Mammary epithelial cell (primary cell): ENCODE measurements at regions of chr12 and their contacts with region 1.

Region 1: GRCh38 chr12:100234598-100235304 is 32.1 kb downstream of the DEPDC4 start:
- DNase-seq: no peak
- H3K4me3 ChIP-seq: no peak overlapping the region
- H3K27ac ChIP-seq: no peak overlapping the region
- H3K4me1 ChIP-seq: peaks cover 5% of the 10 kb centered on the region
- H3K27me3 ChIP-seq: no peaks in the 10 kb centered on the region
- CTCF ChIP-seq: peak; percentile 73 to 77

Region 2: DNA sequence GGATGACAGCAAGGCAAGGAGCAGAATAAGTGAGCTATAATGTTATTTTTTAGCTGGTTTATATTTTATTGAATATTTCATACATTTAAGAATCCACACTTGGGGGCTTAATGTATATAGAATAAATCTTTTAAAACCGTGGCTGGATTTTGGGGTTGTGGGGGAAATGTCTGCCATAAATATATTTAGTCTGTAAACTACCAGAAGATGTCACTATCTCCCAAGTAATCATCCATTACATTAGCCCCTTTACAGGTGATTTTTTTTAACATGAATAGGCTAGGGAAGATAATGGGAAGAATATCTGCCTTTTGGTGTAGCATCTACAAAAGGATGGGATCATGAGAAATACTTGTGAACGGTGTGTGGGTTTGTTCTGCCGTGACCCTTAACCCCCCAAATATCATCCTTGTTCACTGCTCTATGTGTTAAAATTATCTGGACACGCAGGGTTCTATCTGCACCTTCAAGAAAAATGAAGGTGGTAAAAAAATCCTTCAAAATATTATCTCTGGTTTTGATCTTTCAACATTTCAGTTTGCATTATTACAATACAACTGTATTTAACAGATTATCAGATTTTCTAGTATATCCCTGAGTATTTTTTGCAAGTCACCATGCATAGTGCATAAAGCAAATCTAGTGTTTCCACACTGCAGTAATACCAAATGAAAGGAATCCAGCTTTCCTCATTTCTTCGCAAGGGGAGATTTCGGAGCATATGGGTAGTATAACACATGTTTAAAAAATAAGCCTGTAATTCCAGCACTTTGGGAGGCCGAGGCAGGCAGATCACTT is 114.1 kb after region 1 on chr12:
- CTCF ChIA-PET with region 1: no interaction called
- dilution Hi-C with region 1: no loop called
- in situ Hi-C with region 1: no loop called
- intact Hi-C with region 1: loop called (anchors 1 kb)
- DNase-seq: peak; percentile 10
- H3K4me3 ChIP-seq: no peak overlapping the region
- H3K27ac ChIP-seq: no peak overlapping the region
- H3K4me1 ChIP-seq: no peaks in the 10 kb centered on the region
- H3K27me3 ChIP-seq: no peaks in the 10 kb centered on the region
- CTCF ChIP-seq: peak; percentile 38 to 48

Region 3: GRCh38 chr12:100554608-100555077 is 319.9 kb after region 1 on chr12:
- CTCF ChIA-PET with region 1: no interaction called
- dilution Hi-C with region 1: no loop called
- in situ Hi-C with region 1: loop called (anchors 10 to 25 kb)
- intact Hi-C with region 1: loop called (anchors 1 kb)
- DNase-seq: peak; percentile 70
- H3K4me3 ChIP-seq: no peak overlapping the region
- H3K27ac ChIP-seq: no peak overlapping the region
- H3K4me1 ChIP-seq: no peaks in the 10 kb centered on the region
- H3K27me3 ChIP-seq: no peaks in the 10 kb centered on the region
- CTCF ChIP-seq: peak; percentile 82 to 94

Region 4: DNA sequence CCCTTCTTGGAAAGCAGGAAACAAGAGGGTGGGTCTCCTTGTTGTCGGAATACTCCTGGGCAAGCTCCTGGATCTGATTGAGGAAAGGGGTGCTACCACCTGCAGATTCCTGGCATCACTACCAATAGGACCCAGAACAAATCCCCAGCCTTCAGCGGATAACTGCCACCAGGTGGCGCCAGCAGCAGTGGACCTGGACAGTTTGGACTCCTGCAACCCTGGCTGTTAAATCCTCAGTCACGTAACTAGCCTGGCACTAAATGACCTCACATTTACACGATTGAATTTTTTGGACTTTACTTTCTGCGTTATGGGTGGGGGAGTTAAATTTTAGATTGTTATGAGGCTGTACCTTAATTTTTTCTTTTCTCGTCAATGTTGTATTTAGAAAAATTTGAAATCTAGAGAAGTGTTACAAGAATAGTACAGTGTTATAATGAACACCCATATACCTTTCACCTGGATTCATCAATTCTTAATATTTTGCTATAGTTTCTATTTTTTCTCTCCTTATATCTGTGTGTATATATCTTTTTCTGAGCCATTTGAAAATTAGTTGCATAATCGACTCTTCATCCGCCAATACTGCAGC is 434.3 kb after region 1 on chr12:
- CTCF ChIA-PET with region 1: no interaction called
- dilution Hi-C with region 1: no loop called
- in situ Hi-C with region 1: no loop called
- intact Hi-C with region 1: loop called (anchors 1 kb)
- DNase-seq: peak; percentile 56
- H3K4me3 ChIP-seq: no peak overlapping the region
- H3K27ac ChIP-seq: no peak overlapping the region
- H3K4me1 ChIP-seq: no peaks in the 10 kb centered on the region
- H3K27me3 ChIP-seq: no peaks in the 10 kb centered on the region
- CTCF ChIP-seq: peak; percentile 82 to 96